Activated CD4-positive, alpha-beta T cell treated with anti-CD3 and anti-CD28 coated beads for 36 hours (primary cell): ENCODE measurements at regions of chr3 and their contacts with region 1.

Region 1: DNA sequence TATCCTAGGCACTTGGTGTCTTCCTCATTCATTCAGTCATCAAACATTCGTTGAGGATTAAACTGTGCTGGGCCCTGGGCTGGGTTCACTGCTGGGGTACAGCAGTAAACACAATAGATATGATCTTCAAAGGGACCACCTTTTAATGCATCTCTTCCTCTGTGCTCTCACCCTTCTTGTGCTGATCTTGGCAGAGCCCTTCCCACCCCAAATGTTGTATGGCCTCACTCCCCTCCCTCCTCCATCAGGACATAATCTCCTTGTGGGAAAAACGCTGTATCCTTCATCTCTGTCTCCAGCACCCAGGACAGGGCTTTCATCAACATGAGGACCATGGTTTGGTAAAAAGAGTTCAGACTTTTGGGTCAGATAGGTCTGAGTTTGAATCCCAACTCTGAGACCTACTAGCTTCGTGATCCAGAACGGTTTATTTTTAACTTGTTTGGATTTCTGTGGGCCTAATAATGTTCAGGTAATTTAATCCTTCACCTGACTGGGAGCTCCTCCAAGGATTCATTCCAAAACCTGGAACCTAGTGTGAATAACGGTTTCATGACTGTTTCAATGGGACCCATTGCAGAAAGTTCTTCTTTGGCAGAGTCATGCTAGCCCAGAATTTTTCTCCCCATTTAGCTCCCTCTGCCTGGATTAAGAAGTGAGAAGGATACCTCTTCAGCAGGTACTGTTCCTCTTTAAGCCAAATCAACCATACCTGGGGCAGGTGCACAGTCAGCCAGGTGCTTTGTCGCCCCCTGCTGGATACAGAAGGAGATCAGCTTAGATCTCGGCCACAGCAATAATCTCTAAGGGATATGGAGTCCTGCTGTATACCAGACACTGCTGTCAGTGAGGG is 5.2 kb upstream of the WNT7A start:
- DNase-seq: peak; percentile 82
- ATAC-seq: peak; percentile 72
- H3K4me3 Mint-ChIP-seq: no peak overlapping the region
- H3K27ac Mint-ChIP-seq: no peak overlapping the region
- H3K4me1 Mint-ChIP-seq: peaks cover 4% of the 10 kb centered on the region
- H3K27me3 Mint-ChIP-seq: peaks cover 9% of the 10 kb centered on the region

Region 2: GRCh38 chr3:13245615-13245978 is 639.5 kb before region 1 on chr3:
- CTCF ChIA-PET with region 1: no interaction called
- POLR2A ChIA-PET with region 1: no interaction called
- intact Hi-C with region 1: no loop called
- DNase-seq: no peak
- ATAC-seq: no peak
- H3K4me3 Mint-ChIP-seq: no peak overlapping the region
- H3K27ac Mint-ChIP-seq: no peak overlapping the region
- H3K4me1 Mint-ChIP-seq: no peaks in the 10 kb centered on the region
- H3K27me3 Mint-ChIP-seq: no peaks in the 10 kb centered on the region

Region 3: GRCh38 chr3:13495921-13496723 is 389.0 kb before region 1 on chr3:
- CTCF ChIA-PET with region 1: interaction called, 6 read pairs
- POLR2A ChIA-PET with region 1: no interaction called
- intact Hi-C with region 1: loop called (anchors 1 to 2 kb)
- DNase-seq: peak; percentile 84
- ATAC-seq: peak; percentile 97
- H3K4me3 Mint-ChIP-seq: no peak overlapping the region
- H3K27ac Mint-ChIP-seq: no peak overlapping the region
- H3K4me1 Mint-ChIP-seq: no peaks in the 10 kb centered on the region
- H3K27me3 Mint-ChIP-seq: no peaks in the 10 kb centered on the region

Region 4: GRCh38 chr3:13648060-13649001 is 236.7 kb before region 1 on chr3:
- CTCF ChIA-PET with region 1: interaction called, 182 read pairs
- POLR2A ChIA-PET with region 1: no interaction called
- intact Hi-C with region 1: no loop called
- DNase-seq: peak; percentile 87
- ATAC-seq: peak; percentile 63
- H3K4me3 Mint-ChIP-seq: no peak overlapping the region
- H3K27ac Mint-ChIP-seq: no peak overlapping the region
- H3K4me1 Mint-ChIP-seq: peaks cover 18% of the 10 kb centered on the region
- H3K27me3 Mint-ChIP-seq: peaks cover 14% of the 10 kb centered on the region

Region 5: DNA sequence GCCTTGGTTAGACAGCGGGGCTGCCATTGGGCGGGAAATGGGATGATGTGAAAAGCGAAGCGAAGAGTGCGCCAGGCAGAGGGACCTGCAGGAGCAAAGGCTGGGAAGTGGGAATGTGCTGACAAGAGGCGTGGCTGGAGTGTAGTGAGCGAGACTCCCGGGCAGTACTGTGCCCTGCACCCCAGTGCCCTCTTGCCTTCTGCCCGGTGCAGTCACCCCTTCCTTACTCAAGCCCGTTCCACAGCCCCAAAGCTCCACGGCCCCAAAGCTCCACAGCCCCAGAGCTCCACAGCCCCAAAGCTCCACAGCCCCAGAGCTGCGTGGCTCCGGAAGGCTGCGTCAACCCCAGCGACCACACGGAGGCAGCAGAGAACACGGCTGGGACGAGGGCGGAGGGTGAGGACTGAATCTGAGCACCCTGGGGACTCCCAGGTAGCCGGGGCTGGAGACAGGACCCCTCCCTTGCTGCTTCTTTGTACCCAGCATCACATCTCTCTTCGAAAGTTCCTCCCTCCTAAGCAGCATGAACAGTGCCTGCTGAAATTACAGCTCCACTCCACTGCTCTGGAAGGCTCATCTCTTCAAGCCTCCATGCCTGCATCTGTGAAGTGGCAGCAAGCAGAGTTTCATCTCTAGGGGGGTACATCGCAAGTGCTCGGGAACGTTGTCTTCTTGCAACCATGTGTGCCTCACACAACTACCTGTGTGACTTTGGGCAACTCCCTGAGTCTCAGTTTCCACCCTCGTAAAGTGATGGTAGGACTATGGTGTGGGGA is 227.2 kb before region 1 on chr3:
- CTCF ChIA-PET with region 1: interaction called, 182 read pairs
- POLR2A ChIA-PET with region 1: no interaction called
- intact Hi-C with region 1: loop called (anchors 1 kb)
- DNase-seq: peak; percentile 83
- ATAC-seq: peak; percentile 87
- H3K4me3 Mint-ChIP-seq: no peak overlapping the region
- H3K27ac Mint-ChIP-seq: no peak overlapping the region
- H3K4me1 Mint-ChIP-seq: peaks cover 18% of the 10 kb centered on the region
- H3K27me3 Mint-ChIP-seq: peaks cover 2% of the 10 kb centered on the region

Region 6: GRCh38 chr3:13824521-13825310 is 60.4 kb before region 1 on chr3:
- CTCF ChIA-PET with region 1: interaction called, 10 read pairs
- POLR2A ChIA-PET with region 1: no interaction called
- intact Hi-C with region 1: no loop called
- DNase-seq: no peak
- ATAC-seq: no peak
- H3K4me3 Mint-ChIP-seq: no peak overlapping the region
- H3K27ac Mint-ChIP-seq: no peak overlapping the region
- H3K4me1 Mint-ChIP-seq: peaks cover 8% of the 10 kb centered on the region
- H3K27me3 Mint-ChIP-seq: no peaks in the 10 kb centered on the region

Region 7: GRCh38 chr3:13866041-13866965 is 18.8 kb before region 1 on chr3:
- CTCF ChIA-PET with region 1: interaction called, 11 read pairs
- POLR2A ChIA-PET with region 1: no interaction called
- intact Hi-C with region 1: loop called in 1 of 2 experiments (anchors 1 kb)
- DNase-seq: peak; percentile 83
- ATAC-seq: peak; percentile 88
- H3K4me3 Mint-ChIP-seq: peak overlapping the region; percentile 27
- H3K27ac Mint-ChIP-seq: peak overlapping the region; percentile 92
- H3K4me1 Mint-ChIP-seq: peaks cover 59% of the 10 kb centered on the region
- H3K27me3 Mint-ChIP-seq: no peaks in the 10 kb centered on the region

Region 8: GRCh38 chr3:13871791-13872190 is 13.3 kb before region 1 on chr3:
- CTCF ChIA-PET with region 1: interaction called, 11 read pairs
- POLR2A ChIA-PET with region 1: no interaction called
- intact Hi-C with region 1: loop called in 1 of 2 experiments (anchors 1 kb)
- DNase-seq: no peak
- ATAC-seq: no peak
- H3K4me3 Mint-ChIP-seq: no peak overlapping the region
- H3K27ac Mint-ChIP-seq: no peak overlapping the region
- H3K4me1 Mint-ChIP-seq: peaks cover 32% of the 10 kb centered on the region
- H3K27me3 Mint-ChIP-seq: no peaks in the 10 kb centered on the region